Lower lobe of right lung (tissue), 2 donors: ENCODE measurements at regions of chr1 and their contacts with region 1.

Region 1: DNA sequence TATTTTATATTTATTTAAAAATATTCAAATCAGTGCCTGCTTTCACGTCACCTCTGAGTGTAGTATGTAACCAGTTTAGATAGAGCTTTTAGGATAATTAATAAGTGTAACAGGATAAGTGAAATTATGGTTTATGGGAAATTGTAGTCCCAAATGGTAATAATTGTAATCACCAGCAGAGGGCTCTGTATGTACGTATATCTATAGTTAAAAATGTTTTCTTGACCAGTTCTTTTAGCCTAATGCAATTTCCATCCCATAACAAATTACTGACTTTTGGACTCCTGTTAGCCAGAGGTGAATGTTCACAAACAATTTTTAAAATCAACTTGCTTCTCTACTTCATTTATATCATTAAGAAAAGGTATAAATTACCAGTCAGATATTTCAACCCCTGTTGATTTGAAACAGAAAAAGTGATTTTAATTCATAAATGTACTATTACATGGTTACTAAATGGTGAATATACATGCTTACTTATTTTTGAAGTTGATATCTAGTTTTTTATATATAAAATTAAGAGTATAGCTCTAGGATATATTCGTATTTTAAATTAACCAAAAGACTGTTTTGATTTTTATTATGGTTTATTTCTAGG is 25.3 kb downstream of the SLC30A7 start:
- DNase-seq: no peak
- ATAC-seq: peak; percentile 63 to 67
- H3K4me3 ChIP-seq: no peak overlapping the region
- H3K27ac ChIP-seq: no peak overlapping the region
- H3K4me1 ChIP-seq: peaks cover 8% of the 10 kb centered on the region
- H3K27me3 ChIP-seq: no peaks in the 10 kb centered on the region
- CTCF ChIP-seq: peak; percentile 78

Region 2: DNA sequence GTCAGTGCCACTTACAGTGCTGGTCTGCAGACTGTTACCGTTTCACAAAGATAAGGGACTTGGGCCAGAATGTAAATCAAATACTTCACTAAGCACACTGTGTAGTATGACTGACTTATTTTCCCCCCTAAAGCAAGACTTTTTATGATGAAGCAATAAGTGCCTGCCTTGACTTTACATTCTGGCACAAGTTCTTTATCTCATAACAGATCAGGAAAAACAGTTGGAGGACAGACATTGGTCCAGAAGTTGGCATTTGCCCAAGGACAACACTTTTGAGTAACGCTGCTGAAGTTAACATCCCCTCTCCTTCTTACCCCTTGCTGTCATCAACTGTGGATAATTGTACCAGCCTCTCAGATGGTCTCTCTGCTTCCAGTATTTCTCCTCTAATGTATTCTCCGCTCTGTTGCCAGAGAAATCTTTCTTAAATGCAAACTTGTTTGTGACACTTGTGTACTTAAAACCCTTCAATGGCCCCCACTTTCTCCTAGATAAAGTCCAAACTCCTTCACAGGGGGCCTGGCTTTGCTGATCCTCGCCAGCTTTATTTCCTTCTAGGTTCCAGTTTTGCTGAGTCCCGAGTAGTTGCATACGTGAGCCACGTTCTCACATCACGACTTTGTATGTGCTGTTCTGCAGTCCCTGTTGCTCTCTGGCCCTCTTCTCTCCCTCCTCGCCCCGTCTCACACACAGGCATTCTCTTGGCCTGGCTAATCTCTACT is 361.3 kb after region 1 on chr1:
- intact Hi-C with region 1: loop called (anchors 5 kb)
- DNase-seq: no peak
- ATAC-seq: no peak
- H3K4me3 ChIP-seq: no peak overlapping the region
- H3K27ac ChIP-seq: no peak overlapping the region
- H3K4me1 ChIP-seq: peaks cover 4% of the 10 kb centered on the region
- H3K27me3 ChIP-seq: no peaks in the 10 kb centered on the region
- CTCF ChIP-seq: no peak